ENCODE measurements at regions of chr1 and their contacts with region 1.

Region 1: DNA sequence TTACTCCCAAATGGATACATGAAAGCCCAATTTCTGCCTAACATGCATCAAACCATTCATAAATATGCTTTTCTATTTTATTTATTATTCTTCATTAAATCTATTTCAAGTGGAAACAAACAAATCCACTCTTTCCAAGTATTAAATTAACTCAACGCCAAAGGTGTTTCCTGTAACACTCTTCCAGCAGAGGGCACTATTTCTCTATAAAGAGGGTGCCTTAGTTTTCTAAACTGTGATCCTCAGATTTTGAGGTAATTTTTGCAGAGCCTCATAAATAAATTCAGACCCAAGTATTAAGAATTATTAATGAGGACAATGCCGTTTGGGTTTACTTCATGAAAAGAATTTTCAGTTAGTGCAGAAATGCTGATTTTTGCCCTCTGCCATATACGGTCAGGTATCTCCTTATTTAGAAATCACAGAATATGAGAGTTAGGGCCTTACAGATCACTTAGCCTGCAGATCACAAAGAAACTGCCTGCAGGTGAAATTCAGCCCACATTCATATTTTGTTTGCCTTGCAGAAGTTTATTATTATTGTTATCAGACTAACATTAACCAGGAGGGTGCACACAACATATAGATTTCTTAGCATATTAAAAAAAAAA is 40.1 kb upstream of the MYSM1 start:
- DNase-seq: peak; percentile 41
- H3K4me3 ChIP-seq: no peak overlapping the region
- H3K27ac ChIP-seq: no peak overlapping the region
- H3K4me1 ChIP-seq: peaks cover 13% of the 10 kb centered on the region
- H3K27me3 ChIP-seq: no peaks in the 10 kb centered on the region
- CTCF ChIP-seq: peak; percentile 70 to 75

Region 2: GRCh38 chr1:58649555-58649954 is 90.4 kb before region 1 on chr1:
- CTCF ChIA-PET with region 1: no interaction called
- dilution Hi-C with region 1: no loop called
- in situ Hi-C with region 1: no loop called
- intact Hi-C with region 1: no loop called
- DNase-seq: no peak
- H3K4me3 ChIP-seq: no peak overlapping the region
- H3K27ac ChIP-seq: no peak overlapping the region
- H3K4me1 ChIP-seq: peaks cover 3% of the 10 kb centered on the region
- H3K27me3 ChIP-seq: no peaks in the 10 kb centered on the region
- CTCF ChIP-seq: no peak

Region 3: GRCh38 chr1:58699011-58699762 is 40.8 kb before region 1 on chr1:
- CTCF ChIA-PET with region 1: interaction called, 3 read pairs
- dilution Hi-C with region 1: no loop called
- in situ Hi-C with region 1: no loop called
- intact Hi-C with region 1: loop called (anchors 2 kb)
- DNase-seq: peak; percentile 8
- H3K4me3 ChIP-seq: peak overlapping the region; percentile 54 to 88 (median 82)
- H3K27ac ChIP-seq: peak overlapping the region; percentile 86
- H3K4me1 ChIP-seq: peaks cover 6% of the 10 kb centered on the region
- H3K27me3 ChIP-seq: no peaks in the 10 kb centered on the region
- CTCF ChIP-seq: no peak

Region 4: DNA sequence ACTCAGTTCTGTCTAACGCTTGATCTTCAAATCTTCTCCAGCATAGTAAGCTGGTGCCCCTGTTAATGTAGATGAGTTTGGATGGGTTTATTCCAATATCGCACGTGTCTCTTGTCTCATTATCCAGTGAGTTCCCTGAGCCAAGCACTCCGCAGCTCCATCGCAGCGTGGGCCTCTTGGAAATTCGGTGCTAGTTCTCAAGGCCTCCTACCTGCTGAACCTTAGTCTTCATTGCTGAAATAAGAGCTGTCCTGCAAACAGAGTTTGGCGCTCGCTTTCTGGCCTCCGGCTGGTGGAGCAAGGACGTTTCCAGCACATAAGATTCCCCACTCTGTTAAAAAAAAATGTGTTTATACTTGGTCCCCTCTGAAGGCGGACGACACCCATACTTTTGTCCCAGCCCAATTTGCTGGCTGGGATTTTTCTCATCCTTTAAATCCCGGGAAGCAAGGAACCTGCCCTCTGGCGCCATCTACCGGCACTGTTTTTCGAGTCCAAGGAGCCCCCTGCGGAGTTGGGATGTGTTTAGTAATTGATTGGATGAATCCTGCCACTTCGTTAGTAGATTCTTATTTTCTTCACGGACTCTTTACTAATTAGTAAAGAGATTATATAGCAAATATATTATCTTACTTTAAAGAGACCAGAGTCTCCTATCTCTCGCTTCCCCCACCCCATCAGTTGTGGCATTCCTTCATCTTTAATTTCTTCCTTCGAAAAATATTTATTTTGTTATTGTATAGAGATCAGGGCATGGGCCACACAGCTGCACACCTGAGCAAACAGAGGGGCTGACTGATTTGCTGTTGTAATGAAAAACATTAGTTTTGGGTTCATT is 29.2 kb after region 1 on chr1:
- CTCF ChIA-PET with region 1: no interaction called
- dilution Hi-C with region 1: no loop called
- in situ Hi-C with region 1: no loop called
- intact Hi-C with region 1: loop called (anchors 1 kb)
- DNase-seq: peak; percentile 42
- H3K4me3 ChIP-seq: no peak overlapping the region
- H3K27ac ChIP-seq: no peak overlapping the region
- H3K4me1 ChIP-seq: peaks cover 16% of the 10 kb centered on the region
- H3K27me3 ChIP-seq: no peaks in the 10 kb centered on the region
- CTCF ChIP-seq: peak; percentile 72 to 85

Region 5: DNA sequence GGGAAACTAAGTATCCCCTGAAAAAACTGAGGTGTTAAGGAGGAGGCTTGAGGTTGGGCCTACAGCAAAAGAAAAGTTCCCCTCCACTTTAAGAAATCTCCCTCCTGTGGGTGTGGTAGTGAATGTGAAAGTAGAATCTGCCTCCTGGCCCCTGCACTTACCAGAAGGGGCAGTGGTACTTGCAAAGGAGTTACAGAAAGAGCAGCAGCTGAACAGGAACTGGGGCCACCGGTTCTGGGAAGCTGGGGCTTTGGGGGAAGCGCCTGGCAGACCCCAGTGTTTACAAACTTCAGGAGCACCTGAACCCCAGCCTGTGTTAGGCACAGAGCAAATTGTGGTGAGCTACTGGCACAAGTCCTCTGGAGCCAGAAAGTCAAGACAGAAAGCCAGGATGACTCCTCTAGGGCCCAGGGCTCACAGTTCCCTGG is 306.8 kb after region 1 on chr1:
- CTCF ChIA-PET with region 1: no interaction called
- dilution Hi-C with region 1: no loop called
- in situ Hi-C with region 1: no loop called
- intact Hi-C with region 1: loop called (anchors 1 kb)
- DNase-seq: no peak
- H3K4me3 ChIP-seq: no peak overlapping the region
- H3K27ac ChIP-seq: no peak overlapping the region
- H3K4me1 ChIP-seq: peaks cover 12% of the 10 kb centered on the region
- H3K27me3 ChIP-seq: no peaks in the 10 kb centered on the region
- CTCF ChIP-seq: no peak

Region 6: DNA sequence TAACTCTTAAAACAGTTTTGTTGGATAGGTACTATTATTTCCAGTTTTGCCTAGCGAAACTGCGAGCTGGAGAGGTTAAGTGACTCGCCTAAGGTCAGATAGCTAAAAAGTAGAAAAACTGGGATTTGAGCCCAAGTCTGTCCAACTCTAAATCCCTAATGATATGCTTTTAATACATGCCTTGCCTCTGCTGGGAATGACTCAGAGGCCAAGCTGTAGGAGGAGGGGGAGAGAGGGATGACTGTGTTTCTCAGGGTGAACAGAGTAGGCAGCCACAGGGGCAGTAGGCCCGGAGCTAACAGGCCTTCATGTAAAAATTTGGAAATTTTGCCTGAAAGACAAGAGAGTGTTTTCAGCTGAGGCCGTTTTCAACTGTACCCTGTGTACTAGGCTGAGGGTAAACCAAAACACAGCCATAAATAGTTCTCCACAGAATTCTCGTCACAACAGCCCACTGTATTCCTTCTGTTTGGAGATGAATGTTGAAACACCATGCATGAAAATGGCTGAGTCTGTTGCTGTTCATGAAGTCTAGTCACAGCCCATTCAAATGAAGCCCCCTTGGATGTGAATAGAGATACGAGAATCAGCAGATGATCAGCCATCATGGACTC is 967.3 kb after region 1 on chr1:
- CTCF ChIA-PET with region 1: no interaction called
- dilution Hi-C with region 1: no loop called
- in situ Hi-C with region 1: loop called in 1 of 2 experiments (anchors 10 kb)
- intact Hi-C with region 1: no loop called
- DNase-seq: peak; percentile 79
- H3K4me3 ChIP-seq: no peak overlapping the region
- H3K27ac ChIP-seq: no peak overlapping the region
- H3K4me1 ChIP-seq: peaks cover 21% of the 10 kb centered on the region
- H3K27me3 ChIP-seq: no peaks in the 10 kb centered on the region
- CTCF ChIP-seq: no peak